HCT116 (cell line): ENCODE measurements at regions of chr12 and their contacts with region 1.

Region 1: GRCh38 chr12:120228291-120229070 is 27.6 kb upstream of the RPLP0 start:
- DNase-seq: no peak
- ATAC-seq: peak; percentile 52
- H3K4me3 ChIP-seq: peak overlapping the region; percentile 19 to 58
- H3K27ac ChIP-seq: peak overlapping the region; percentile 100
- H3K4me1 ChIP-seq: peaks cover 55 to 85% of the 10 kb centered on the region in 2 experiments
- H3K27me3 ChIP-seq: no peaks in the 10 kb centered on the region
- CTCF ChIP-seq: peak in 2 of 3 experiments; percentile 89; a peak in 4 of 6 replicates
- POLR2A ChIP-seq: no peak
- RAD21 ChIP-seq: no peak

Region 2: DNA sequence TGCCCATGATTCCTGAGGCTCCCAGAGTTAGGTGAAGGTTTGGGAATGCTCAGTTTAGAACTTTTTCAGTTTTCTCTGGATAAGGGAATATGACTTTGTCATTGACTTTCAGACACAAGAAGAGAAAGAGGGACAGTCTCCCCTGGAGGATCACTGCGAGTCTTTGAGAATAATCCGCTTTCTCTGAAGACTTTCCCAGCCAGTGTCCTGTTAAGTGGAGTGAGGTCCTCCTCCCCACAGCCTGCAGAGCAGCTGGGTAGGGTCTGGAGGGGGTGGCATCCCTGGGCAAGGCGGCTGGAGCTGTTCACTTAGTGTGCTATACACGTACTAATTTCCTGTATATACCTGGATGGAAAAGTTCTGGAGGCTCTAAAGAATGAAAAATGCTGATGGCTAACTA is 103.5 kb before region 1 on chr12:
- CTCF ChIA-PET with region 1: interaction called, 3 read pairs
- POLR2A ChIA-PET with region 1: no interaction called
- RAD21 ChIA-PET with region 1: interaction called in 1 of 2 experiments, 10 read pairs
- intact Hi-C with region 1: no loop called
- DNase-seq: no peak
- ATAC-seq: no peak
- H3K4me3 ChIP-seq: no peak overlapping the region
- H3K27ac ChIP-seq: no peak overlapping the region
- H3K4me1 ChIP-seq: no peaks in the 10 kb centered on the region
- H3K27me3 ChIP-seq: no peaks in the 10 kb centered on the region
- CTCF ChIP-seq: no peak
- POLR2A ChIP-seq: no peak
- RAD21 ChIP-seq: no peak

Region 3: GRCh38 chr12:120241561-120242274 is 13.2 kb after region 1 on chr12:
- CTCF ChIA-PET with region 1: interaction called, 8 read pairs
- POLR2A ChIA-PET with region 1: interaction called, 22 read pairs
- RAD21 ChIA-PET with region 1: no interaction called
- intact Hi-C with region 1: no loop called
- DNase-seq: no peak
- ATAC-seq: no peak
- H3K4me3 ChIP-seq: no peak overlapping the region
- H3K27ac ChIP-seq: peak overlapping the region; percentile 18; the same call in 1 of the 2 replicates
- H3K4me1 ChIP-seq: peaks cover 38 to 82% of the 10 kb centered on the region in 2 experiments
- H3K27me3 ChIP-seq: no peaks in the 10 kb centered on the region
- CTCF ChIP-seq: no peak
- POLR2A ChIP-seq: no peak
- RAD21 ChIP-seq: no peak

Region 4: DNA sequence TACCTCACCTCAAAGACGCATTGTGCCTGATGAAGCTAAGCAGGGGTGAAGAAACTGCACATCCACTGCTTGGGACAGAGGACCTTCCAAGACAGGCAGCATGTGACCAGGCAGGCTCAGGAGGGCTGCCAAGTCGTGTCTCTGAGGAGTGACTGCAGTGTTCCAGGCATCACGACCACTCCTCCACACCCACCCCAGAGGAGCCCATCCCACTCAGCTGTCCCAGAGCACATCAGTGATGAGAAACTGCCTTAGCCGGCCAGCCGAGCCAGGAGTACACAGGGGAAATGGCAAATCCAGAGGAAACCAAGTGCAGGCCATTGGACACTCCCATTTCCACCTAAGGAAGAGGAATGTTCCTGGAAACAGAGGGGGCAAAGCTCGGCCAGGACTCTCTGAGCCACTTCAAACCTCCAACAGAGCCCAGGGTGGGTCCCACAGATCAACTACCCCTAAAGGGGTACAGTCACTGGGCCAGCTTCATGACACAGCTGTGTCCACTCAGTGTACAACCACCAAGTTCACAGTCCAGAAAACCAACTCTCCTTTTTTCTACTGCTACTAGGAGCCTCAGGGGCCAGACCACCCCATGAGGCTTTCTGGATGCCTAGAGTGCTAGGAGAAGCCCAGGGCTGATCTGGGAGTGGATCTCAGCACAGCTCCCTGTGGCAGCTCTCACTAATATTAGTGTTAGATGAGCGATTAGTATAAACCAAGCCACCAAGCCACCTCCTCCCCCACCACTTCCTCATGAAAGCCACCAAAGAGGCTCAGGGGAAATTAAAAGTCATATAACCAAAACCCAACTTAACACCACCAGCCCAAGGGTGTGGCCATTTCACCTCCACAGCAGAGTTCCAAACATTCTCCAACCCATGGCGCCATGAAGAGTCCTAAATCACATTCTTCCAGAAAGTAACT is 21.7 kb after region 1 on chr12:
- CTCF ChIA-PET with region 1: interaction called, 11 read pairs
- POLR2A ChIA-PET with region 1: interaction called, 22 read pairs
- RAD21 ChIA-PET with region 1: interaction called, 3 to 4 read pairs
- intact Hi-C with region 1: no loop called
- DNase-seq: no peak
- ATAC-seq: no peak
- H3K4me3 ChIP-seq: no peak overlapping the region
- H3K27ac ChIP-seq: peak overlapping the region; percentile 72
- H3K4me1 ChIP-seq: peaks cover 53 to 84% of the 10 kb centered on the region in 2 experiments
- H3K27me3 ChIP-seq: no peaks in the 10 kb centered on the region
- CTCF ChIP-seq: no peak
- POLR2A ChIP-seq: no peak
- RAD21 ChIP-seq: no peak

Region 5: DNA sequence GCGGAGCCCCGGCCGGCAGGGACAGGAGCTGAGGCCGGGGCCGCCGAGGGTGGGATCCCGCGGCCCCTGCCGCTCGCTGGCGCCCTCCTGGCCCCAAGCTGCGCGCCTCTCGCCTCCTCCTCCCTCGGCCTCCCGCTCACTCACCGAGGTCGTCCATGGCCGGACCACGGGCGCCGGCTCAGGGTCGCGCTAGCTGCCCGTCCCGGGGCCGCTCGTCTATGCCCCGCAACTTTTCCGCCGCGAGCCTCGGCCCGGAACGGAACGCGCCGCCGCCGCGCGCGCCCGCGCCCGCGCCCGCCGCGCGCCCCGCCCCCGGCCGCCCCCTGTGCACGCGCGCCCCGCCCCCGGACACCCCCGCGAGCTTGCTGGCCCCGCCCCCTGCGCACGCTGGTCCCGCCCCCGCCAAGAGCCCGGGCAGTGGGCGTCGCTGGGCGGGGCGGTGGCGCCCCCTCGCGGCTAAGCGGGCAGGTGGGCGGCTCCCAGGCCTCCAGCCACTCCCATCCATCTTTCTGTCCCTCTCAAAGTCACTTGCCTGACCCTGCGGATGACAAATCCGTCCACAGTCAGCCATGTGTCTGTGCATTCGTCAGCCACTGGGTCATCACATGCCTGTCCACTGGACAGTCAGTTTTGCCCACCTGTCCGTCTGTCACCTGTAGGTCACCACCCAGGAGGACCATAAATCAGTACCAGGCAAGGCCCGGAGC is 37.1 kb after region 1 on chr12 and contains the start of gene PXN:
- CTCF ChIA-PET with region 1: interaction called, 181 read pairs
- POLR2A ChIA-PET with region 1: interaction called, 123 read pairs
- RAD21 ChIA-PET with region 1: interaction called, 33 to 62 read pairs
- intact Hi-C with region 1: loop called (anchors 1 kb)
- DNase-seq: peak; percentile 67
- ATAC-seq: peak; percentile 84
- H3K4me3 ChIP-seq: peak within 1 kb of the TSS; percentile 66 to 85
- H3K27ac ChIP-seq: peak within 1 kb of the TSS; percentile 93
- H3K4me1 ChIP-seq: peaks cover 41 to 55% of the 10 kb centered on the region in 2 experiments
- H3K27me3 ChIP-seq: no peaks in the 10 kb centered on the region
- CTCF ChIP-seq: peak in 2 of 3 experiments; percentile 73 to 80; a peak in 4 of 6 replicates
- POLR2A ChIP-seq: peak; percentile 14
- RAD21 ChIP-seq: no peak
- total RNA-seq, gene PXN: 211 TPM

Region 6: DNA sequence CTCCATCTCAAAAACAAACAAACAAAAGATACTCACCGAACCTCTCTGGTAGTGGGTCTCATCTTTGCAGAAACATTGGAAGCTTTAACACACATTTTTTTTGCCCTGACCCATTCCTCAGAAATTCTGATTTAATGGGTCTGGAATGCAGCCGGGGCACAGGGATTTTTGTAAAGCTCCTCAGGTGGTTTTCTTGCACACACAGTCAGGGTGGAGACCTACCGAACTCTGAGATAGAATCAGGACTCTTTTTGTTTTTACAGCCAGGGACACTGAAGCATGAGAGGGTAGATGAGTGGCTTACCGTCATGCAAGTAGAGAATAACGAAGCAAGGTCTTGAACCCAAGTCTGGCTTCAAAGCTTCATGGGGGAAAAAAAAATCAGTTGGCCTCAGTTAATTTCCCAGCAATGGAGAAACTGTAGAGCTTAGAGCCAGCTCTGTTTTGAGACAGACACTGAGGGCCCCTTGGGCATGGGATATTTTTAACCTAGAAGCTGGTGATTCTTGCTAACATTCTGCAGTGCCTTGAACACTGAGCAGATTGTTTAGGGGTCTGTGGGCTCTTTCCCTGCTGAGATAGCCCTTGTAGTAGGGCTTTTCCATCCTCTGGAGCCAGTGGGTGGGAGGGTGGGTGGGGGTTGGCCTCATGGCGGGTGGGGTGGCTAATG is 58.5 kb after region 1 on chr12:
- CTCF ChIA-PET with region 1: interaction called, 26 read pairs
- POLR2A ChIA-PET with region 1: interaction called, 394 read pairs
- RAD21 ChIA-PET with region 1: interaction called, 5 to 10 read pairs
- intact Hi-C with region 1: loop called (anchors 1 kb)
- DNase-seq: no peak
- ATAC-seq: no peak
- H3K4me3 ChIP-seq: no peak overlapping the region
- H3K27ac ChIP-seq: no peak overlapping the region
- H3K4me1 ChIP-seq: peaks cover 13 to 35% of the 10 kb centered on the region in 2 experiments
- H3K27me3 ChIP-seq: no peaks in the 10 kb centered on the region
- CTCF ChIP-seq: no peak
- POLR2A ChIP-seq: no peak
- RAD21 ChIP-seq: no peak